ENCODE measurements at regions of chr3 and their contacts with region 1.

Region 1: DNA sequence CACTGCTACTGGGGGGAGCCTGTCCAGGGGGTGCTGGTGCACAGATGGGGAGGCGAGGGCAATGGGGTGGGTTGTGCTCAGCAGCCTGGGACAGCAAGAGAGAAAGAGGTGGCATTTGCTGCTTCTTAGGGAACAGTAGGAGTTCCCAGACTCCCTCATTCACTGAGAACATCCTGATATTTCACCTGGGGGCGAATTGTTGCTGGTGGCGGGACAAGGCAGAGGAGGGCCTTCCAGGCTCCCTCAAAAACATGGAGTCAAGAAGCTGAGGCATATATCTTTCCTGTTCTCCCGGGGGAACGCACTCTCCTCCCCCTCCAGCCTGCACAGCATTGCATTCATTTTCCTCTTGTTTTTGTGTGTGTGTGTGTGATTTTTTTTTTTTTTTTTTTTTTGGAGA is 65.7 kb downstream of the CDC25A start:
- DNase-seq: no peak
- H3K4me3 ChIP-seq: no peak overlapping the region
- H3K27ac ChIP-seq: no peak overlapping the region
- H3K4me1 ChIP-seq: no peaks in the 10 kb centered on the region
- CTCF ChIP-seq: no peak

Region 2: DNA sequence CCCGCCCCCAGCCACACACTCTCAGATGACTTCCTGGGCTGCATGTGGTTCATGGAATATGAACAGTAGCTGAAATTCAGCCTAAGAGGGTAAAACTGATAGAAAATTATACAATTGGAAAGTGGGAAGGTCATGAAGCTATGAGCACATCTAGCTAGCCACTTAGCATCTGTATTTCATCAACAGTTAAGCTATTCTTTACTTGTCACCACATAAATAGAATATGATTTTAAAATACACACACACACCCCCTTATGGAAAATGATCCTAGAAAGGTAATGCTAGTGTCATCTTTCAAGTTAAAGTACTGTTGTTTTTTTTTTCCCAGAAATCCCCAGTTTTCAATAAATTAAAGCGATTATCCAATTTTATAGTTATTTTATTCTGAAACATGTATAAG is 109.8 kb before region 1 on chr3:
- CTCF ChIA-PET with region 1: no interaction called
- POLR2A ChIA-PET with region 1: interaction called, 13 read pairs
- intact Hi-C with region 1: no loop called
- DNase-seq: no peak
- H3K4me3 ChIP-seq: no peak overlapping the region
- H3K27ac ChIP-seq: no peak overlapping the region
- H3K4me1 ChIP-seq: no peaks in the 10 kb centered on the region
- CTCF ChIP-seq: no peak

Measured in OCI-LY7 (cell line).